AG04450 (cell line): ENCODE measurements at regions of chr2 and their contacts with region 1.

Region 1: DNA sequence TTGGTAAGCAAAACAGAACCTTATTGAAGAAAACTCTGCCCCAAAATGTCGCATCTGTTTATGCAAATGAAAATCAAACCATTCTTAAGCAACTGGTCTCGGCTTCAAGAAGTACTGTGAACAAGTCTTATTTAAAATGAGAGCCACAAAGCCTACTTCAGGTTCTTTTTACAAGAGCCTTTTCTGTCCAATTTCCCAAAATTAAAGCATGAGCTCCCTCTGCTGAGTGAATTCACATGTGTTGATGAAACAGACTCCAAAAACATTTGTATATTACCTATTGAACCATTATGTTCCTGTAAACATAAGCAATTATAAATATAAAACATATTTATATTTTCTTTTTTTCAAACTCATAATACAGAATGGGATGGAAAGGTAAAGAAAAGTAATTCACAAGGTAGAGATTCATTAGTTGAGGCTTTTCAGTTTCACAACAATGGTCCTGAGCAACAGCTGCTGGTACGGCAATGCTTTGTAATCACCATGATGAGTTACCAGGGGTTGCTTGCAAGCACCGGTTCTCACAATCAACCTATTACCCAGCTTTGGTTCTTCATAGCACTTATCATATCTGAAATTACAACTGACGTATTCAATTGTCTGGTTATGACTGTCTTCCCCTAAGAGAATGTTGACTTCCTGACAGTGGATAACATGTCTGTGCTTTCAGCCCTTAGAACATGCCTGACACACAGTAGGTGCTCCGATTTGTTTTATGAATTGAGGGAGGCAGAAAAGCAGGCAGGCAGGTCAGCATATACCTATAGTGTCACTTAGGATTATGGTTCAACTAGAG is 108.4 kb upstream of the BZW1 start:
- DNase-seq: peak; percentile 51
- H3K4me3 ChIP-seq: no peak overlapping the region
- H3K27ac ChIP-seq: no peak overlapping the region
- H3K27me3 ChIP-seq: no peaks in the 10 kb centered on the region
- CTCF ChIP-seq: peak; percentile 68

Region 2: GRCh38 chr2:199973703-199974102 is 729.6 kb before region 1 on chr2:
- CTCF ChIA-PET with region 1: interaction called, 31 read pairs
- POLR2A ChIA-PET with region 1: no interaction called
- DNase-seq: no peak
- H3K4me3 ChIP-seq: no peak overlapping the region
- H3K27ac ChIP-seq: no peak overlapping the region
- H3K27me3 ChIP-seq: no peaks in the 10 kb centered on the region
- CTCF ChIP-seq: peak; percentile 60

Region 3: GRCh38 chr2:200177971-200178911 is 525.1 kb before region 1 on chr2:
- CTCF ChIA-PET with region 1: no interaction called
- POLR2A ChIA-PET with region 1: no interaction called
- DNase-seq: peak; percentile 49
- H3K4me3 ChIP-seq: no peak overlapping the region
- H3K27ac ChIP-seq: no peak overlapping the region
- H3K27me3 ChIP-seq: peaks cover 8% of the 10 kb centered on the region
- CTCF ChIP-seq: no peak

Region 4: DNA sequence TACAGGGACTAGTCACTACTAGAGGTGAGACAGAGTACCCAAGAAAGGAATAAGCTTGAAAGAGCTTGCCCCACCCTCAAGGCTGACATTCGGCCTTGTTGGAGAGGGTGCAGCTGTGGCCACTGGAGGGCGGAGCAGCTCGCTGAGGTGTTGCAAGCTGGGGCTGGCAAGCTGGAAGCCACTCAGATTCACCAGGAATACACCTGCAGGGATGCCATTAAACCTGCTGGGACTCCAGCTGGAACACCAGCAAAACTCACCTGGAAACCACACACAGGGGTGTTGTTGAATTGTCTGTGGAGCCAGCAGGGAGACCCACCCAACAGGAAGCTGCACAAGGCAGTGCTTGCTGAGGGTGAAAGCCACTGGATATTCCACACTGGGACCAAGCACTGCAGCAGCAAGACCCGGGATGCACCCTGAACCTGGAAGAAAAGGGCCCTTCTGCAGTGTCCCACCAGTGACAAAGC is 219.6 kb before region 1 on chr2:
- CTCF ChIA-PET with region 1: interaction called, 23 read pairs
- POLR2A ChIA-PET with region 1: no interaction called
- DNase-seq: no peak
- H3K4me3 ChIP-seq: no peak overlapping the region
- H3K27ac ChIP-seq: no peak overlapping the region
- H3K27me3 ChIP-seq: no peaks in the 10 kb centered on the region
- CTCF ChIP-seq: peak; percentile 54

Region 5: DNA sequence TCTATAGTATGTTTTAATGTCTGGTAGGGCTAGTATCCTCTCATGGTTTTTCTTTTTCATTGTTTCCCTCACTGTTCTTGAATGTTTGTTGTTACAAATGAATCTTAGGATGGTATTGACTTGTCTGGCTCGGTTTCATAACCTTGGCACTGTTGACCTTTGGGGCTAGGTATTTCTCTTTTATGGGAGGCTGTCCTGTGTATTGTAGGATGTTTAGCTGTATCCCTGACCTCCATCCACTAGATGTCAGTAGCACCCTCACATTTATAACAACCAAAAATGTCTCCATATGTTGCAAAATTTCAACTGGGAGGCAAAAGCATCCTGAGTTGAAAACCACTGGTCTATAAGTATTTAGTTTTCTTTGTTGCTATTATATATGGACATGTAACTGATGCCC is 124.5 kb before region 1 on chr2:
- CTCF ChIA-PET with region 1: interaction called, 63 read pairs
- POLR2A ChIA-PET with region 1: no interaction called
- DNase-seq: no peak
- H3K4me3 ChIP-seq: no peak overlapping the region
- H3K27ac ChIP-seq: no peak overlapping the region
- H3K27me3 ChIP-seq: no peaks in the 10 kb centered on the region
- CTCF ChIP-seq: peak; percentile 64

Region 6: GRCh38 chr2:200585730-200586643 is 117.3 kb before region 1 on chr2 and contains the start of gene AOX1:
- CTCF ChIA-PET with region 1: interaction called, 35 read pairs
- POLR2A ChIA-PET with region 1: no interaction called
- DNase-seq: no peak
- H3K4me3 ChIP-seq: peak within 1 kb of the TSS; percentile 65
- H3K27ac ChIP-seq: peak within 1 kb of the TSS; percentile 13
- H3K27me3 ChIP-seq: no peaks in the 10 kb centered on the region
- CTCF ChIP-seq: peak; percentile 30
- polyA plus RNA-seq, gene AOX1: 5.6 and 7.9 TPM in 2 replicates

Region 7: DNA sequence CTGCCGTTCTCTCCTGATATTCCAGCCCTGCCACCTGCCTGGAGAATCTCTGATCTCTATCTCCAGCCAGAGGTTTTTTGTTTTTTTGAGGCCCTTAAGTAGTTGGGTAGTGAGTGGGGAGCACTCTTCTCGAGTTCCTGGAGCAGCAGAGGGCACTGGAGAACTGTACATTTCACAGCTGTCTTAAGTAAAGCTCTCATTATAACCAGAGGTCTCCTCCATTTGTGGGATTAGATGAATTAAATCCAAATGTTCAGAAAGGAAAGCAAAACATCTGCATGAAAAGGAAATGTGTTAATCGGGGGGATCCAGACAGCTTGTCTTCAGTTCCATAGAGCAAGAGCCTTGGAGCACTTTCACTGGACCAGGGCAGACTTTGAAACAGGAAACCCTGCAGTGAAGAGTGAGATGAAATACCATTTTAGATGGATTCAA is 84.7 kb before region 1 on chr2:
- CTCF ChIA-PET with region 1: interaction called, 55 read pairs
- POLR2A ChIA-PET with region 1: no interaction called
- DNase-seq: no peak
- H3K4me3 ChIP-seq: no peak overlapping the region
- H3K27ac ChIP-seq: no peak overlapping the region
- H3K27me3 ChIP-seq: no peaks in the 10 kb centered on the region
- CTCF ChIP-seq: peak; percentile 52

Region 8: DNA sequence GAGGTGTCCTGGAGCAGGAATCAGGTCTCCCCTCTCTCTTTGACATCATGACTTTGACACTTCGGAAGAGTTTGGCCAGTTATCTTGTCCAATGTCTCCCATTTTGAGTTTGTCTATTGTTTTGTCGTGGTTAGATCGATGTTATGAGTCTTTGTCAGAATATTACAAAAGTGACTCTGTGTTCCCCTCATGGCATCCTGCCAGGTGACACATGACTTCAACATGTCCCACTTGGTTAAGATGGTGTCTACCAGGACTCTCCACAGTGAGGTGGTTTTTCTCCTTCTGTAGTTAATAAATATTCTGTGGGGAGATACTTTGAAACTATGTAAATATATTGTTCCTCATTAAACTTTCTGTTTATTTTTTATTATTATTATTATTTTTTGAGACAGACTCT is 31.7 kb after region 1 on chr2:
- CTCF ChIA-PET with region 1: interaction called, 74 read pairs
- POLR2A ChIA-PET with region 1: no interaction called
- DNase-seq: no peak
- H3K4me3 ChIP-seq: no peak overlapping the region
- H3K27ac ChIP-seq: no peak overlapping the region
- H3K27me3 ChIP-seq: peaks cover 18% of the 10 kb centered on the region
- CTCF ChIP-seq: no peak